ENCODE measurements at regions of chr3 and their contacts with region 1.

Region 1: DNA sequence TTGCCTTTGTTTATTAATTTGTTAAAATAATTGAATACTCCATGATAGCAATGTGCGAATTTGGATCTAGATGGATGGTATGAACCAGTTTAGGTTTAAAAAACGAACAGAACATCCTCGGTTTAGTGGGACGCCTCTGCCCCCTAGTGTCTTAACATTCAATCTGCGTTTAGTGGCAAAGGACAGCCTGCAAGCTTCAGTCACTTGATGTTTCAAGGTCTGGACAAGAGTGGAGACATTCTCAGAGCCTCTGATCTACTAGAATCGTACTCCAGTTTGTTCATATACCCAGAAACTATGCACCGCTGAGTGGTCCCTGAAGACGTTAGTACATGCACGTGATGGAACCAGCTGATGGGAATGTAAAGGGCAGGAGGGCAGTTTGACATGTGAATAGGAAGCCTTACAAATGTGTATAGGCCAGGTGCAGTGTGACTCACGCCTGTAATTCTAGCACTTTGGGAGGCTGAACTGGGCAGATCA is 17.8 kb upstream of the ATP13A4 start:
- DNase-seq: peak; percentile 39
- H3K4me3 ChIP-seq: no peak overlapping the region
- H3K27ac ChIP-seq: no peak overlapping the region
- H3K4me1 ChIP-seq: no peaks in the 10 kb centered on the region
- H3K27me3 ChIP-seq: no peaks in the 10 kb centered on the region
- CTCF ChIP-seq: peak; percentile 28 to 78 (median 60)
- POLR2A ChIP-seq: no peak

Region 2: DNA sequence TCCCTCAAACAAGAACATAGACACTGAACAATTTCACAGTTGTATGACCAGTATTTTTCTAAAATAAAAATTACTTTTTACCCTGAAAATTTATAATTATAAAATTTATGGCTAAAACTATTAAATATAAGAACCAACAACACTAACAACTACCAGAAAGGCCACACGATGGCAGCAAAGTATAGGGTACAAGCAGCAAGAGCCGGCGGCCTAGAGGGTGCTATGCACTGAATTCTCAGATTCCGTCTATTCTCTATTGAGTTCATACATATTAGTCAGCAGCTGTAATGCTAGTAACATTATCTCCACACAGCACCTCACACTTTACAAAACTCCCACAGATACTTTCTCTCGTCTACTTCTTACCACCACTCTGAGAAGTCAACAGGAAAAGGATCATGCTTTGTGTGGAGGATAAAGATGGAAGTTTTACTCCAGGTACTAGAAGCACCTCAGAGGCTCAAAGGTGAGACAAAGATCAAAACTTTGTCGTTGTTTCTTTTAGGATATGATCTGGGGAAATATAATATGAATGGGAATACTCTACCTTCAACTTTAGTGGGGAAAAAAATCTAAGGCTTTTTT is 1005.7 kb before region 1 on chr3:
- intact Hi-C with region 1: loop called (anchors 10 kb)
- DNase-seq: peak; percentile 85
- H3K4me3 ChIP-seq: no peak overlapping the region
- H3K27ac ChIP-seq: no peak overlapping the region
- H3K4me1 ChIP-seq: no peaks in the 10 kb centered on the region
- H3K27me3 ChIP-seq: no peaks in the 10 kb centered on the region
- CTCF ChIP-seq: peak; percentile 48 to 91 (median 84)
- POLR2A ChIP-seq: no peak

Region 3: GRCh38 chr3:193464889-193465288 is 107.6 kb before region 1 on chr3:
- intact Hi-C with region 1: loop called (anchors 5 kb)
- DNase-seq: no peak
- H3K4me3 ChIP-seq: no peak overlapping the region
- H3K27ac ChIP-seq: no peak overlapping the region
- H3K4me1 ChIP-seq: no peaks in the 10 kb centered on the region
- H3K27me3 ChIP-seq: no peaks in the 10 kb centered on the region
- CTCF ChIP-seq: no peak
- POLR2A ChIP-seq: no peak

Region 4: GRCh38 chr3:193816590-193817311 is 244.3 kb after region 1 on chr3:
- intact Hi-C with region 1: no loop called
- DNase-seq: no peak
- H3K4me3 ChIP-seq: no peak overlapping the region
- H3K27ac ChIP-seq: no peak overlapping the region
- H3K4me1 ChIP-seq: no peaks in the 10 kb centered on the region
- H3K27me3 ChIP-seq: no peaks in the 10 kb centered on the region
- CTCF ChIP-seq: no peak
- POLR2A ChIP-seq: peak; percentile 36

Measured in prostate gland (tissue), 2 donors.